ENCODE measurements at regions of chr9 and their contacts with region 1.

Region 1: GRCh38 chr9:99057665-99058625 is 47.0 kb upstream of the TGFBR1 start:
- DNase-seq: peak; percentile 36
- ATAC-seq: peak; percentile 51
- H3K4me3 Mint-ChIP-seq: peak overlapping the region; percentile 70
- H3K27ac Mint-ChIP-seq: peak overlapping the region; percentile 94
- H3K4me1 Mint-ChIP-seq: peaks cover 73% of the 10 kb centered on the region
- H3K27me3 Mint-ChIP-seq: no peaks in the 10 kb centered on the region
- CTCF ChIP-seq: no peak

Region 2: GRCh38 chr9:98989036-98990000 is 68.6 kb before region 1 on chr9:
- CTCF ChIA-PET with region 1: no interaction called
- POLR2A ChIA-PET with region 1: interaction called, 5 read pairs
- intact Hi-C with region 1: loop called (anchors 1 kb)
- DNase-seq: no peak
- ATAC-seq: no peak
- H3K4me3 Mint-ChIP-seq: no peak overlapping the region
- H3K27ac Mint-ChIP-seq: no peak overlapping the region
- H3K4me1 Mint-ChIP-seq: peaks cover 21% of the 10 kb centered on the region
- H3K27me3 Mint-ChIP-seq: no peaks in the 10 kb centered on the region
- CTCF ChIP-seq: no peak

Region 3: GRCh38 chr9:99039505-99040182 is 18.3 kb before region 1 on chr9:
- CTCF ChIA-PET with region 1: no interaction called
- POLR2A ChIA-PET with region 1: interaction called, 3 read pairs
- intact Hi-C with region 1: loop called (anchors 1 kb)
- DNase-seq: no peak
- ATAC-seq: peak; percentile 82
- H3K4me3 Mint-ChIP-seq: no peak overlapping the region
- H3K27ac Mint-ChIP-seq: peak overlapping the region; percentile 59
- H3K4me1 Mint-ChIP-seq: peaks cover 27% of the 10 kb centered on the region
- H3K27me3 Mint-ChIP-seq: no peaks in the 10 kb centered on the region
- CTCF ChIP-seq: no peak

Region 4: GRCh38 chr9:99104459-99105151 is 46.7 kb after region 1 on chr9 and contains the start of gene TGFBR1:
- CTCF ChIA-PET with region 1: interaction called, 10 read pairs
- POLR2A ChIA-PET with region 1: interaction called, 54 read pairs
- intact Hi-C with region 1: loop called (anchors 1 kb)
- DNase-seq: peak; percentile 98
- ATAC-seq: peak; percentile 85
- H3K4me3 Mint-ChIP-seq: peak within 1 kb of the TSS; percentile 89
- H3K27ac Mint-ChIP-seq: peak within 1 kb of the TSS; percentile 83
- H3K4me1 Mint-ChIP-seq: peaks cover 50% of the 10 kb centered on the region
- H3K27me3 Mint-ChIP-seq: no peaks in the 10 kb centered on the region
- CTCF ChIP-seq: no peak
- total RNA-seq, gene TGFBR1: 53.5 and 65.3 TPM in 2 replicates

Region 5: DNA sequence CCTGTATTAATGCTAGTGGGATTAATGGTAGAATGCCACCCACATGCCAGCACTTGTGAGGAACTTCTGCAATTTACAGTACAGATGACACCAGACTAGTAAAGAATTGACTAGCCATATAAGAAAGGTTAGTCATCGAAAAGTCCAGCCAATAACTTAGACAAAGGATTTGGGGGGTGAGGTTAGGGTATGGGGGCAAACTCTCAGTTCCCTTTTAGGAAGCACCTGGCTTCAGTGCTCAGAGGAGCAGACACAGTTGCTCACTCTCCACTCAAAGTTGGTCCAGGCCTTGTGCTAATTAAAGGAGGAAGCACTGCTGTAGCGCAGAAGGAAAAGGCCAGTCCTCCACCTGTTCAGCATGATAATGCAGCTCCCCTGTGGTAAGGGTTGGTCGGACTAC is 72.1 kb after region 1 on chr9:
- CTCF ChIA-PET with region 1: no interaction called
- POLR2A ChIA-PET with region 1: interaction called, 5 read pairs
- intact Hi-C with region 1: loop called (anchors 1 kb)
- DNase-seq: no peak
- ATAC-seq: peak; percentile 94
- H3K4me3 Mint-ChIP-seq: peak overlapping the region; percentile 17
- H3K27ac Mint-ChIP-seq: peak overlapping the region; percentile 77
- H3K4me1 Mint-ChIP-seq: peaks cover 73% of the 10 kb centered on the region
- H3K27me3 Mint-ChIP-seq: no peaks in the 10 kb centered on the region
- CTCF ChIP-seq: no peak